Caco-2 (cell line): ENCODE measurements at regions of chr15 and their contacts with region 1.

Region 1: DNA sequence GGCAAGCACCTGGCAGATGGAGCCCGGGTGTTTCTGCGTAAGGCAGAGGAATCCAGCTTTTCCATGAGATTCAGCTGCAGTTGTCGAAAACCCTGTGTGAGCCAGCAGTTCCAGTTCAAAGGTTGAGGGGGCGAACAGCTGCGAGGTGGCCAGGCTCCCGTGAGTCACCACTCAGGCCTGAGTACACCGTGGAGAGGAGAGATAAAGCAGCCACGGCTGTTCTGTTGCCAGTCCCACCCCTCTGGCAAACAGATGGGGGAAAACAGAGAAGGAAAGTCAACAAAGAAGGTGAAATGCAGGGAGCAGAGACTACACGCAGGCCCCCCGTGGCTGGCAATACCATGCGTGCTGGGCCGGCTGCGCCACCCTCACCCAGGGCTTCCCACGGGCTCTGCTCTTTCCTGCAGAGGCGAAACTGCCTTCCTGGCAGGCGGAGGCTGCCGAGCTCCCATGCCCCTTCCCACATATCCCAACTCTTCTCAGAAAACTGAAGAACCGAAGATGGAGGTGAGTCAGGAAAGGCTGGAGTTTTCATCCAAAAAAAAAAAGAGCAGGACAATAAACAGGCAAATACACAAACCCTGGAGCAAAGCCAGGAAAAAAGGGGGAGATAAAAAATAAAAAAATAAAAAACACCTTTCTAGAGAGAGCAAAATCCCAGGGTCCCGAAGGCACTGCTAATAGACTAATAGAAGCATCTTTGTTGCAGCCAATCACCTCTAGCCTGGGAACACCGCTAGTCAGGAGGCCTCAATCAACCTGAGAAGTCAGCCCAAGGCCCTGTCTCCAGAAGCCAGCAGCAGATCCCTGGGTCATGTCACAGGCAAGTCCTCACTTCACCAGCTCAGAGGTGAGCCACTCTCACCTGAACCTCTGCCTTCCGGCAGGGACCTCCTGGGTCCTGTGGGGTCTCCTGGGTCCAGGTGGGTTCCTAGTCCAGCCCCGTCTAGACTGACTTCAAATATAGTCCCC is 37.7 kb downstream of the FAM174B start:
- DNase-seq: peak; percentile 88 to 94
- H3K4me3 ChIP-seq: peak overlapping the region; percentile 9; the same call in 1 of the 2 replicates
- H3K4me3 Mint-ChIP-seq: peak overlapping the region; percentile 72
- H3K27ac Mint-ChIP-seq: peak overlapping the region; percentile 86
- H3K4me1 ChIP-seq: peaks cover 37% of the 10 kb centered on the region
- H3K4me1 Mint-ChIP-seq: peaks cover 30% of the 10 kb centered on the region
- H3K27me3 ChIP-seq: no peaks in the 10 kb centered on the region
- H3K27me3 Mint-ChIP-seq: no peaks in the 10 kb centered on the region
- CTCF ChIP-seq: no peak

Region 2: GRCh38 chr15:92521624-92522008 is 96.2 kb before region 1 on chr15:
- CTCF ChIA-PET with region 1: interaction called, 3 read pairs
- POLR2A ChIA-PET with region 1: no interaction called
- intact Hi-C with region 1: loop called (anchors 5 kb)
- DNase-seq: peak; percentile 71 to 76
- H3K4me3 ChIP-seq: no peak overlapping the region
- H3K4me3 Mint-ChIP-seq: no peak overlapping the region
- H3K27ac Mint-ChIP-seq: no peak overlapping the region
- H3K4me1 ChIP-seq: no peaks in the 10 kb centered on the region
- H3K4me1 Mint-ChIP-seq: peaks cover 9% of the 10 kb centered on the region
- H3K27me3 ChIP-seq: no peaks in the 10 kb centered on the region
- H3K27me3 Mint-ChIP-seq: no peaks in the 10 kb centered on the region
- CTCF ChIP-seq: peak; percentile 62 to 72

Region 3: GRCh38 chr15:92595506-92596381 is 22.1 kb before region 1 on chr15:
- CTCF ChIA-PET with region 1: no interaction called
- POLR2A ChIA-PET with region 1: no interaction called
- intact Hi-C with region 1: no loop called
- DNase-seq: no peak
- H3K4me3 ChIP-seq: no peak overlapping the region
- H3K4me3 Mint-ChIP-seq: no peak overlapping the region
- H3K27ac Mint-ChIP-seq: no peak overlapping the region
- H3K4me1 ChIP-seq: no peaks in the 10 kb centered on the region
- H3K4me1 Mint-ChIP-seq: no peaks in the 10 kb centered on the region
- H3K27me3 ChIP-seq: no peaks in the 10 kb centered on the region
- H3K27me3 Mint-ChIP-seq: no peaks in the 10 kb centered on the region
- CTCF ChIP-seq: no peak

Region 4: GRCh38 chr15:92638291-92638708 is 20.5 kb after region 1 on chr15:
- CTCF ChIA-PET with region 1: no interaction called
- POLR2A ChIA-PET with region 1: no interaction called
- intact Hi-C with region 1: loop called (anchors 2 kb)
- DNase-seq: peak; percentile 56 to 66
- H3K4me3 ChIP-seq: no peak overlapping the region
- H3K4me3 Mint-ChIP-seq: peak overlapping the region; percentile 37
- H3K27ac Mint-ChIP-seq: peak overlapping the region; percentile 86
- H3K4me1 ChIP-seq: peaks cover 33% of the 10 kb centered on the region
- H3K4me1 Mint-ChIP-seq: peaks cover 40% of the 10 kb centered on the region
- H3K27me3 ChIP-seq: no peaks in the 10 kb centered on the region
- H3K27me3 Mint-ChIP-seq: no peaks in the 10 kb centered on the region
- CTCF ChIP-seq: no peak

Region 5: GRCh38 chr15:92655178-92655995 is 37.6 kb after region 1 on chr15 and contains the start of gene FAM174B:
- CTCF ChIA-PET with region 1: interaction called, 3 read pairs
- POLR2A ChIA-PET with region 1: no interaction called
- intact Hi-C with region 1: loop called (anchors 2 kb)
- DNase-seq: peak in 1 of 2 experiments; percentile 69
- H3K4me3 ChIP-seq: peak within 1 kb of the TSS; percentile 86
- H3K4me3 Mint-ChIP-seq: peak within 1 kb of the TSS; percentile 89
- H3K27ac Mint-ChIP-seq: peak within 1 kb of the TSS; percentile 85
- H3K4me1 ChIP-seq: peaks cover 59% of the 10 kb centered on the region
- H3K4me1 Mint-ChIP-seq: peaks cover 33% of the 10 kb centered on the region
- H3K27me3 ChIP-seq: no peaks in the 10 kb centered on the region
- H3K27me3 Mint-ChIP-seq: no peaks in the 10 kb centered on the region
- CTCF ChIP-seq: no peak
- total RNA-seq, gene FAM174B: 79.4 and 87.5 TPM in 2 replicates

Region 6: GRCh38 chr15:92665100-92665555 is 47.3 kb after region 1 on chr15:
- CTCF ChIA-PET with region 1: no interaction called
- POLR2A ChIA-PET with region 1: no interaction called
- intact Hi-C with region 1: loop called (anchors 2 kb)
- DNase-seq: no peak
- H3K4me3 ChIP-seq: no peak overlapping the region
- H3K4me3 Mint-ChIP-seq: peak overlapping the region; percentile 25
- H3K27ac Mint-ChIP-seq: peak overlapping the region; percentile 44
- H3K4me1 ChIP-seq: peaks cover 80% of the 10 kb centered on the region
- H3K4me1 Mint-ChIP-seq: peaks cover 56% of the 10 kb centered on the region
- H3K27me3 ChIP-seq: no peaks in the 10 kb centered on the region
- H3K27me3 Mint-ChIP-seq: no peaks in the 10 kb centered on the region
- CTCF ChIP-seq: no peak

Region 7: DNA sequence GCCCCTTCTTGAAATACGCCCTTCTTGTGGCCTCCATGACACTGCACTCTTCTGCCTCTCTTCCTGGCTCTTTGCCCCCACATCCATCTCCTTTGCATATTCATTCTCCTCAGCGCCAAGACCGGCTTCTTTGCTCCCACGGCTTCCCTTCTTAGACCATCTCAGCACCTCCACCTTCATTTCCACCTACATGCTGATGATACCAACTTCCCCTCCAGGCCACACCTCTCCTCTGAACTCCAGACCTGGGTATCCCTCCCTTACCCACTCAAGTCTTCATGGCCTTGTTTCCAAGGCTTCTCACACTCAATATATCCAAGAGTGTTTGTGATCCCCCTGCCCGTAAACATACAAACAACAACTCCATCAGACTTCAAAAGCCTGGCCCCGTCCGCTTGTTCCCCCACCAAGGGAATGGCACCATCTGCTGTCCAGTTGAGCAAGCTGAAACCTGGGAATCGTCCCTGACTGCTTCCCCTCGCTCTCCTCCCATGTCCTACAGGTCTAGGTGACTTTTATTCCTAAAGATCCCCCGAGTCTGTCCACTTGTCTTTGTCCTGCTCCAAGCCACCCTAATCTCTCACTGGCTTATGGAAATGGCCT is 65.5 kb after region 1 on chr15:
- CTCF ChIA-PET with region 1: no interaction called
- POLR2A ChIA-PET with region 1: no interaction called
- intact Hi-C with region 1: loop called (anchors 2 kb)
- DNase-seq: peak; percentile 48 to 60
- H3K4me3 ChIP-seq: no peak overlapping the region
- H3K4me3 Mint-ChIP-seq: no peak overlapping the region
- H3K27ac Mint-ChIP-seq: peak overlapping the region; percentile 54
- H3K4me1 ChIP-seq: peaks cover 21% of the 10 kb centered on the region
- H3K4me1 Mint-ChIP-seq: peaks cover 33% of the 10 kb centered on the region
- H3K27me3 ChIP-seq: no peaks in the 10 kb centered on the region
- H3K27me3 Mint-ChIP-seq: no peaks in the 10 kb centered on the region
- CTCF ChIP-seq: peak; percentile 37 to 64

Region 8: GRCh38 chr15:92788196-92788595 is 170.4 kb after region 1 on chr15:
- CTCF ChIA-PET with region 1: no interaction called
- POLR2A ChIA-PET with region 1: no interaction called
- intact Hi-C with region 1: no loop called
- DNase-seq: no peak
- H3K4me3 ChIP-seq: no peak overlapping the region
- H3K4me3 Mint-ChIP-seq: no peak overlapping the region
- H3K27ac Mint-ChIP-seq: no peak overlapping the region
- H3K4me1 ChIP-seq: no peaks in the 10 kb centered on the region
- H3K4me1 Mint-ChIP-seq: no peaks in the 10 kb centered on the region
- H3K27me3 ChIP-seq: no peaks in the 10 kb centered on the region
- H3K27me3 Mint-ChIP-seq: no peaks in the 10 kb centered on the region
- CTCF ChIP-seq: no peak